ENCODE measurements at regions of chr3 and their contacts with region 1.

Region 1: DNA sequence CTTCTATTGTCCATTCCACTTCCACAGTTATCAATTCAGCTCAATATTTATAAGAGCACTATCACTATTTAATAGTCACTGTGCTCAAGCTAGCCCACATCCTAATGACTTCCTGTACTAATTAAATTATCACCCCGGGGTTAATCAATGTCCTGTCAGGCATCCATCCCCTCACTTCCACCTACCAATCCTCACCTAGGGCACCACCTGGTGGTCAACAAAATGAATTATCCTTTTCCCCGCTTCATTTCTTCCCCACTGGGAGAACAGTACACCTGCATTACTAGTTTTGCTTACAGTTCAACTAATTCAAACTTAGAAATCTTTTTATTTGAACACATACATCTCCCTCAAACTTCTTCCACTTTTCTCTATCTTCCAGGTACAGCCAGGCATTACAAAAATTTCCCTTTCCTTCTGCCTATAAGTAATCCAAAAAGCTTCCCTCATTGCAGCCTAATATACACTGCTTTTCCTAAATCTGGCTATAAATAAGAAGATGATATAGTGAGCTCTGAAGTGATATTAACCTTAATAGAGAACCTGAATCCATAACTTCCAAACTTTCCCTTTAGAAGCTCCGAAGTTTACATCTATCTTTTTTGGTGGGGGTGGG is 68.5 kb downstream of the TMCC1 start:
- DNase-seq: peak; percentile 25 to 45
- H3K4me3 ChIP-seq: no peak overlapping the region
- H3K27ac ChIP-seq: no peak overlapping the region
- H3K4me1 ChIP-seq: peaks cover 0 to 4% of the 10 kb centered on the region in 2 donors
- H3K27me3 ChIP-seq: no peaks in the 10 kb centered on the region
- CTCF ChIP-seq: peak; percentile 27 to 88 (median 64)
- POLR2A ChIP-seq: no peak

Region 2: DNA sequence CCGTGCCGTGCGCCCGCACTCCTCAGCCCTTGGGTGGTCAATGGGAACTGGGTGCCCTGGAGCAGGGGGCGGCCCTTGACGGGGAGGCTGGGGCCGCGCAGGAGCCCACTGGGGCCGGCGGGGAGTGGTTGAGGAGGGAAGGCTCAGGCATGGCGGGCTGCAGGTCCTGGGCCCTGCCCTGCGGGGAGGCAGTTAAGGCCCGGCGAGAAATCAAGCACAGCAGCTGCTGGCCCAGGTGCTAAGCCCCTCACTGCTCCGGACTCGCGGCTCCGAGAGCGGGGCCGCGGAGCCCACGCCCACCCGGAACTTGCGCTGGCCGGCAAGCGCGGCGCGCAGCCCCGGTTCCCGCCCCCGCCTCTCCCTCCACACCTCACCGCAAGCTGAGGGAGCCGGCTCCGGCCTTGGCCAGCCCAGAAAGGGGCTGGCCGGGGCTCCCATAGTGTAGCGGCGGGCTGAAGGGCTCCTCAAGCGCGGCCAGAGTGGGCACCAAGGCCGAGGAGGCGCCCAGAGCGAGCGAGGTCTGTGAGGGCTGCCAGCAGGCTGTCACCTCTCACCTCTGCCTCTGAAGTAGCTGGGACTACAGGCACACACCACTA is 756.6 kb before region 1 on chr3:
- intact Hi-C with region 1: no loop called
- DNase-seq: peak; percentile 21 to 30
- H3K4me3 ChIP-seq: peak overlapping the region in 1 of 3 donors; percentile 17
- H3K27ac ChIP-seq: peak overlapping the region in 1 of 3 donors; percentile 50
- H3K4me1 ChIP-seq: peaks cover 10 to 13% of the 10 kb centered on the region in 2 donors
- H3K27me3 ChIP-seq: no peaks in the 10 kb centered on the region
- CTCF ChIP-seq: no peak
- POLR2A ChIP-seq: no peak

Region 3: GRCh38 chr3:129490242-129491045 is 334.6 kb before region 1 on chr3:
- intact Hi-C with region 1: loop called (anchors 10 kb)
- DNase-seq: peak; percentile 78 to 84
- H3K4me3 ChIP-seq: no peak overlapping the region
- H3K27ac ChIP-seq: peak overlapping the region; percentile 63 to 87 (median 81)
- H3K4me1 ChIP-seq: peaks cover 6 to 38% of the 10 kb centered on the region in 2 donors
- H3K27me3 ChIP-seq: no peaks in the 10 kb centered on the region
- CTCF ChIP-seq: peak; percentile 69 to 89 (median 85)
- POLR2A ChIP-seq: no peak

Region 4: GRCh38 chr3:129627429-129628168 is 197.4 kb before region 1 on chr3:
- intact Hi-C with region 1: loop called (anchors 2 kb)
- DNase-seq: peak; percentile 73 to 78
- H3K4me3 ChIP-seq: peak overlapping the region in 1 of 3 donors; percentile 60
- H3K27ac ChIP-seq: peak overlapping the region; percentile 87 to 97 (median 94)
- H3K4me1 ChIP-seq: peaks cover 36 to 57% of the 10 kb centered on the region in 2 donors
- H3K27me3 ChIP-seq: no peaks in the 10 kb centered on the region
- CTCF ChIP-seq: peak; percentile 55 to 97 (median 86)
- POLR2A ChIP-seq: no peak

Region 5: GRCh38 chr3:129650256-129650872 is 174.7 kb before region 1 on chr3:
- intact Hi-C with region 1: loop called (anchors 5 kb)
- DNase-seq: peak; percentile 69 to 70
- H3K4me3 ChIP-seq: no peak overlapping the region
- H3K27ac ChIP-seq: no peak overlapping the region
- H3K4me1 ChIP-seq: peaks cover 17 to 31% of the 10 kb centered on the region in 2 donors
- H3K27me3 ChIP-seq: no peaks in the 10 kb centered on the region
- CTCF ChIP-seq: peak in 5 of 6 experiments; percentile 45 to 76 (median 65)
- POLR2A ChIP-seq: no peak

Region 6: DNA sequence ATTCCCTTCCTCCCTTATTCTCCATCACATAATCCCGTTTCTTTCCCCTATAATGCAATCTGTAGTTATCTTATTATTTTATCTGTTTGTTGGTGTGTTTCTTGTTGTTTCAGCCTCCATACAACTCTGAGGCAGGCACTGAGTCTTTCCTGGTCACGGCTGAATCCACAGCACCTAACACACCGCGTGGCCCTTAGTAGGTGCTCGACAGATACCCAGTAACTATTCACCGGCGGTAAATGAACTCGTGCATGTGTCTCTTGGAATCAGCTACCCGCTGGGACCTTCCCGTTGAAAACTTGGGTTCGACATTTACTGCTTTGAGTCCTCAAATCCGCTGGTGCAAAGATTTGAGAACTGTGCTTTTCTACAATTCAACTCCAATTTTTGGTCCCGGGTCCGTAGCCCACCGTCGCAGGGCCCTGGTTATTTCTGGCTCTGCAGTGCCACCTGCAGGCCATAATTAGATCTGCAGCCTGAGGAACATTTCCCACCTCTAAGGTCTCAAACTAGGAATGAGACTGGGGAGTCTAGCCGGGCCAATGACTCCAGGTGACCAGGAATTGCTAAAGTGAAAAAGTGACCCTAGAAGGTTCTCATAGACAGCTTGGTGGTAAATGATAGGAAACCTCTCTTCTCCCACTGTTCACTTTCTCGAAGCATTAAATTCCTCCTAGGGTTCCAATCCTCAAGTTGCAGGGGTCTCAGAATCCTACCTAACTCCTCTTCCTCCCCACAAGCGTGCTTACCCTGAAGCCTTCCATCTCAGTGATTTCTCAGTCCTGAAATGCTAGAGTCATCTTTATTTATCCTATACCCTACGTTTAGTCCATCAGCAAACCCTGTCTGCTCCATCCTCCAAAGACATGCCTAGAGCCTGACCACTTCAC is 109.4 kb after region 1 on chr3:
- intact Hi-C with region 1: loop called (anchors 5 kb)
- DNase-seq: peak; percentile 26 to 28
- H3K4me3 ChIP-seq: no peak overlapping the region
- H3K27ac ChIP-seq: no peak overlapping the region
- H3K4me1 ChIP-seq: no peaks in the 10 kb centered on the region
- H3K27me3 ChIP-seq: no peaks in the 10 kb centered on the region
- CTCF ChIP-seq: peak; percentile 75 to 87 (median 84)
- POLR2A ChIP-seq: no peak

Measured in thyroid gland (tissue), 4 donors.